PC-9 (cell line): ENCODE measurements at regions of chr7 and their contacts with region 1.

Region 1: DNA sequence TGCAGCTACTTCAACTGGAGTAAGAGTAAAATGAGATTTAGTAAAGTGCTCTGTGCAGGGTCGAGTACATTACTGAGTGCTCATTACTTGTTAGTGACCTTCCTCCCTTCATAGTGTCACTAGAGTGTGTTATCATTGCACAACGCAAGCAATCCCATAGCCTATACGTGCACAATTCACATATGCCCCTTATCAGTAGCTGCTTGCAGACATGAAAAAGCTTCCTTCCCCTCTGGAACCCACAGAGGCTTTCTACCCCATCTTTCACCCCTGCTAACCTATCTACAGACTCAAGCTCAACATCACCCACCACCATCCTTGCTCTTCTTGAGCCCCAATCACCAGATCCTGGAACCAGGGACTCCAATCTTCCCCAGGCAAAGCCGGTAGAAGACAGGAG is 59.3 kb downstream of the C7orf25 start:
- DNase-seq: no peak
- H3K4me3 ChIP-seq: no peak overlapping the region
- H3K27ac ChIP-seq: no peak overlapping the region
- H3K4me1 ChIP-seq: no peaks in the 10 kb centered on the region
- H3K27me3 ChIP-seq: peaks cover 61% of the 10 kb centered on the region
- CTCF ChIP-seq: no peak

Region 2: DNA sequence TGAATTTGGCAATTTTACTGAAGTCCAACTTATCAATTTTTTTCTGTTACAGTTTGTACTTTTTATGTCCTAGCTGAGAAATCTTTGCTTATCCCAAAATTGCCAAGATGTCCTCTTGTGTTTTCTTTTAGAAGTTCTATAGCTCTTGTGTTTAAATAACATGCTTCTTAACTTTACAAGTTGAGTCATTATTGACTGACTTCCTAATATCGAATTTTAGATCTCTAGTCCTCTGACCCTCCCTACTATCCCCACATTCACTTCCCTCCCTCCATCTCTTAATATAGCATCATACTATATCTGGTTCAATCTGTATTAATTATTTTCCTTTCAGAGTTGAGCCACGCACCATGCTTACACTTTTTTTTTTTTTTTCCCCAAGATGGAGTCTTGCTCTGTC is 141.6 kb after region 1 on chr7:
- CTCF ChIA-PET with region 1: no interaction called
- POLR2A ChIA-PET with region 1: no interaction called
- intact Hi-C with region 1: no loop called
- DNase-seq: no peak
- H3K4me3 ChIP-seq: no peak overlapping the region
- H3K27ac ChIP-seq: no peak overlapping the region
- H3K4me1 ChIP-seq: no peaks in the 10 kb centered on the region
- H3K27me3 ChIP-seq: peaks cover 74% of the 10 kb centered on the region
- CTCF ChIP-seq: no peak

Region 3: DNA sequence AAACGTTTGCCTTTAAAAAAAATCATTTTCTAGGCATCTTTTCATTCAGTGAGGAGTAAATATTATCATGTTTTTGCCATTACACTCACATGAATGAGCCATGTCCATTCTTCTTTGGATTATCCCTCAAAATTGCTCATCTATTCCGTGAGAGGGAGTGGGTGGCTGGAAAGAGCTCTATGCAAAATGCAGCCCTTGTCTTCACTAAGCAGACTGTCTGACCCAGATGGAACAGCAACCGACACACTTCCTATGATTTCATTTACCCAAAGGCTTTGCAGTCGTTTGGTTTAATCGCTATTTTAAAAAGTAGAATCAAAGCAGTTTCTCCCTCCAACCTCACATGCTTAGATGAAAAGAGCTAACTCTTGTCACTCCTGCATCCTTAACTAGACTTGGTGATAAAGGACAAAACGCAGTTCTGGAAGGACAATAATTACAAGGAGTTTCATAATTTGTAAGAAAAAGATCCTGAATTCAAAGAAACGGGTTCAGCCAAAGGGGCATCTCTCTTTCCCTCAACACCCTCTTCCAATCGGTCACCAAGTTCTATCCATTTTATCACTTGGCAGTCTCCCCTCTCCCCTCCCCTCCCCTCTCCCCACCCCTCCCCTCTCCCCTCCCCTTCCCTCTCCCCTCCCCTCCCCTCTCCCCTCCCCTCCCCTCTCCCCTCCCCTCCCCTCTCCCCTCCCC is 532.2 kb after region 1 on chr7:
- CTCF ChIA-PET with region 1: interaction called, 20 read pairs
- POLR2A ChIA-PET with region 1: no interaction called
- intact Hi-C with region 1: no loop called
- DNase-seq: no peak
- H3K4me3 ChIP-seq: no peak overlapping the region
- H3K27ac ChIP-seq: no peak overlapping the region
- H3K4me1 ChIP-seq: no peaks in the 10 kb centered on the region
- H3K27me3 ChIP-seq: peaks cover 35% of the 10 kb centered on the region
- CTCF ChIP-seq: no peak